Activated CD4-positive, alpha-beta memory T cell treated with anti-CD3 and anti-CD28 coated beads for 36 hours (primary cell): ENCODE measurements at regions of chr20 and their contacts with region 1.

Region 1: DNA sequence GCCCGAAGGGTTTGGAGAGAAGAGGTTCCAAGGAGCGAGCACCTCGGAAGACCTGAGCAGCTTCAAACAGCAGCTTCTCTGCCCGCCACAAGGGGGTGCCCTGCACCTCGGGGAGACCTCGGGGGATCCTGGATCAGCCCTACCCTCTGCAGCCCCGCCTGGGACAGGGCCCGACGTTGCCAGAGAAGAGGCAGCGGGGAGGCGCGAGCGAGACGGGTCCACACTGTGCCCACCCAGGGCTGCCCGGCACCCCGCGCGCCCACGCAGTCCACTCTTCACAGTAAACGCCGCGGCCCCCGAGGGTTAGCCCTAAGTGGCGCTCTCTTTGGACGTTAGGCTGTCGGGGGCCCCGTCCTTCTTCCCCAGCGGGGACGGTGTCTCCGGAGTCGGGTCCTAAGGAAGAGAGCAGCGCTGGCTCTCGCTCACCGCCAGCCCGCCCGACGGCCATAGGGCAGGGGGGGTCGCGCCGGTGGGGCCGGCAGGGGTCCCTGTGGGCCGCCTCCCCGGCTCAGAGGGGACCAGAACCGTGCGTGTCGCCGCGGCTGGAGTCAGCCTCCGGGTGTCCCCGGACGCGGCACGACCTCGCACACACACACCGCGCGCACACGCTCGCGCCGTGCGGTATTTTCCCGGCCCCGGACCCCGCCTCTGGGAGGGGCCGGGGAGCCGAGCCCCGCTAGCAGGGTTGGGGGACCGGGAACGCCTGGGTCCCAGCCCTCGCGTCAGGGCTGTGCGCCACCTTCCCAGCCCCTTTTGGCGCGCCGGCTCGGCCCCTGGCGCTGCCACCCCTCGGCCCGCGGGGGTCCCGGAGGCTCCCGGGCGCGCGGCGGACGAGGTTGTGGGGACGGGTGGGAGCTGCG is 929 bp downstream of the CDH22 start:
- DNase-seq: peak; percentile 78
- H3K4me3 Mint-ChIP-seq: no peak overlapping the region
- H3K27ac Mint-ChIP-seq: no peak overlapping the region
- H3K4me1 Mint-ChIP-seq: peaks cover 6% of the 10 kb centered on the region
- H3K27me3 Mint-ChIP-seq: peaks cover 50% of the 10 kb centered on the region

Region 2: GRCh38 chr20:46283426-46284039 is 23.8 kb before region 1 on chr20:
- CTCF ChIA-PET with region 1: interaction called, 11 read pairs
- POLR2A ChIA-PET with region 1: no interaction called
- intact Hi-C with region 1: no loop called
- DNase-seq: no peak
- H3K4me3 Mint-ChIP-seq: no peak overlapping the region
- H3K27ac Mint-ChIP-seq: no peak overlapping the region
- H3K4me1 Mint-ChIP-seq: no peaks in the 10 kb centered on the region
- H3K27me3 Mint-ChIP-seq: peaks cover 38% of the 10 kb centered on the region

Region 3: DNA sequence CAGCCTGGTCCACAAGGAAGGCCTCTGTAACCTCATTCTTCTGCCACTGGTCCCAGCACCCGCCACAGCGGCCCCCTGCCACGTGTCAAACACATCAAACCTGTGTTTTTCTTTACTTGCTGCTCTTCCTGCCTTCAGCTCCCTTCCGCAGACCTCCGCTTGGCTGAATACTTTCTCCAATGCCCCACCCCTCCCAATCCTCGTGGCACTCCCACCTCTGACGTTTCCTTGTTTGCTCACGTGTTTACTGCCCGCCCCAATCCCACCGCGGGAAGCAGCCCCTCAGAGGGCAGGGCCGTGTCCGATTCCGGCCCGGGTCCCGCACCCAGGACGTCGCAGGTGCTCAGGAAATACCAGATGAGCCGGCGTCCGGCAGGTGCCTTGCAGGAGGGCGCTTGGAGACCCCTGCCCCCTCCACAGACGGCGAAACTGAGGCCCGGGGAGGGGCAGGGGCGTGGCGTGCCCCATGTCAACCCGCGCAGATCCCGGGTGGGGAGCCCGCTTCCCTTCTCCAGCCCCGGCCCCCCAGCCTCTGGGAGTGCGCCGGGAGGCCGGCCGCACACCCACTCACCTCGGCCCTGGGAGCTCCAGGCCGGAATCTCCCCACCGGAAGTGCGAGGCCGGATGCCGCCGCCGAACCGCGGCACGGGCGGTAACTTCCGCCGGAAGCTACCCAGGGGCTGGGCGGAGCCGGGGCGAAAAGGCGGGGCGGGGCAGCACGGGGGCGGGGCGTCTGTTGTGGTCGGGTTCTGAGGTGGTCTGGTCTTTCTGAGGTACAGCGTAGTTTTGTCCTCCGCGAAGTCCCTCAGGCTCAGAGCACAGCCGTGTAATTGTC is 56.6 kb after region 1 on chr20:
- CTCF ChIA-PET with region 1: interaction called, 8 read pairs
- POLR2A ChIA-PET with region 1: no interaction called
- intact Hi-C with region 1: loop called (anchors 5 kb)
- DNase-seq: peak; percentile 91
- H3K4me3 Mint-ChIP-seq: peak overlapping the region; percentile 94
- H3K27ac Mint-ChIP-seq: peak overlapping the region; percentile 94
- H3K4me1 Mint-ChIP-seq: peaks cover 81% of the 10 kb centered on the region
- H3K27me3 Mint-ChIP-seq: no peaks in the 10 kb centered on the region

Region 4: GRCh38 chr20:46411637-46412036 is 104.3 kb after region 1 on chr20:
- CTCF ChIA-PET with region 1: interaction called, 19 read pairs
- POLR2A ChIA-PET with region 1: no interaction called
- intact Hi-C with region 1: loop called (anchors 1 kb)
- DNase-seq: no peak
- H3K4me3 Mint-ChIP-seq: no peak overlapping the region
- H3K27ac Mint-ChIP-seq: no peak overlapping the region
- H3K4me1 Mint-ChIP-seq: peaks cover 28% of the 10 kb centered on the region
- H3K27me3 Mint-ChIP-seq: peaks cover 3% of the 10 kb centered on the region